ENCODE measurements at regions of chr17 and their contacts with region 1.

Region 1: DNA sequence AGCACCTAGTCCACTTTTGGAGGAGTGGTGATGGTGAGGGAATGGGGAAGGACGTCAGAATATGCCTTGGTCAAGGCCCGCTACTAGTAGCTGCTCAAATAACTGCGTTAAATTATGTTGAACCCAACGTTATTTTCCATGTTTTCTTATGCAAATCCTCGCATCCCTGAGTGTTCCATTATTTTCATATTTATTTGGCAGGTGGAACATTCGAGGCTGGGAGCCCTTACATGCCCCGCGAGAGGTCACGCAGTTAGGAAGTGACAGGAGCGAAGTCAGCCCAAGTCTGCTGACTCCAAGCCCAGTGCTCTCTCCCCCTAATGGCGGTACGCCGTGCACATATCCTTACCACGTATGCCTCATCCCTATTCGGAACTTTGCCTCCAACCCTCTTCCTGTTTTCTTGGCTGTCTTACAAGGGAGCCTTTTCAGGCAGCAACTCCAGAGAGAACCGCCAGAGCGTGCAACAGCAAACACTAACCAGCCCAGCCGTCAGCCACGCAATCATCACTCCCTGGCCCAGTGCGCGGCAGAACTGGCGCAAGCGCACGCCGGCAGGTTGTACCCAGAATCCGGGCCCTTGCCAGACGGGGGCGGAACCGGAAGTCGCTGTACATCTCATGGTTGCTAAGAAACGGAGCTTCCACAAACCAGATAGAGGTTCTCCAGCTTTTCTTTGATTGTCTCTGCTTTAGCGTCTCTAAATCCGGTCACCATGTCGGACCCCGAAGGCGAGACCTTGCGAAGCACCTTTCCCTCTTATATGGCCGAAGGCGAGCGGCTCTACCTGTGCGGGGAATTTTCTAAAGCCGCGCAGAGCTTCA is at the start of gene ODAD4:
- DNase-seq: peak; percentile 98
- H3K4me3 Mint-ChIP-seq: peak within 1 kb of the TSS; percentile 97
- H3K27ac Mint-ChIP-seq: peak within 1 kb of the TSS; percentile 97
- H3K4me1 Mint-ChIP-seq: peaks cover 55% of the 10 kb centered on the region
- H3K27me3 Mint-ChIP-seq: no peaks in the 10 kb centered on the region
- total RNA-seq, gene ODAD4: 0.40 to 0.42 TPM

Region 2: GRCh38 chr17:41904242-41904841 is 25.9 kb before region 1 on chr17:
- CTCF ChIA-PET with region 1: no interaction called
- POLR2A ChIA-PET with region 1: no interaction called
- DNase-seq: no peak
- H3K4me3 Mint-ChIP-seq: no peak overlapping the region
- H3K27ac Mint-ChIP-seq: no peak overlapping the region
- H3K4me1 Mint-ChIP-seq: no peaks in the 10 kb centered on the region
- H3K27me3 Mint-ChIP-seq: no peaks in the 10 kb centered on the region

Region 3: DNA sequence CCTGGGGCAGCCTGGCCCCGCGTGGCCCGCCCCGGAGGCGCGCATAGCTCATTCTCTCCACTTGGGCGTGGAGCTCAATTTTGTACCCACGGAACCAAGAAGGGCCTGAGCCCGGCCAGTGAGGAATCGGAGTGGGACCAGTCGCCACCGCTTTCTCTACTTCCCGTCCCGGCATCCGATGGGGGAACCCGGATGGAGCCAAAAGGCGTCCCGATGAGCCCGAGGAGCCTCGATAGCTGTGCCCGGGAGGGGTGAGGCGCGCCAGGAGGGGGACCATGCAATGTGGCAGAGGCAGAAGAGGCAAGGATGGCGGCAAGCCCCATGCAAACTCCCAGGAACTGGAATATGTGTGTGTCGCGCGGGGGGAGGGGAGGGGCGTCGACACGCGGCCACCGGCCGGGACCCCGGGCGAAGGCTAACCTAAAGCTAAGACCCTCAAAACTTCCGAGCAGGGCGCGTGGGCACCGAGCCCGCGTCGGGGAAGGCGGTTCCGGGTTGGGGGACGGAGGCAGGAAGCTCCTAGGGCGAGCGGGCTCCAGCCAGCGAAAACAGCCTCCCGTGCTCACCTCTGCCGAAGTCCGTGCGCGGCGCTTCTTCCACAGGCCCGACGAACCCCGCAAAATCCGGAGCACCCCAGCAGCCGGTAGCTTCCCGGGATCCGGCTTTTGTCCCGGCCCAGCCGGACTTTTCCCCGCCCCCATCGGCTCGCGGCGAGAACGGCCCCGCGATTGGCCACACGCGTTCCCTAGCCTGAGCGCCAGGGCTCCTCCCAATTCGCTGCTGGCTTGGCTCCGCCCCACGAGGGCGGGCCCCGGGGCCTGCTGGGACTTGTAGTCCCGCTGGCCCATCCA is 11.7 kb before region 1 on chr17 and contains the start of gene ACLY:
- CTCF ChIA-PET with region 1: interaction called, 15 read pairs
- POLR2A ChIA-PET with region 1: interaction called, 5 read pairs
- DNase-seq: peak; percentile 98
- H3K4me3 Mint-ChIP-seq: peak within 1 kb of the TSS; percentile 95
- H3K27ac Mint-ChIP-seq: peak within 1 kb of the TSS; percentile 96
- H3K4me1 Mint-ChIP-seq: peaks cover 38% of the 10 kb centered on the region
- H3K27me3 Mint-ChIP-seq: no peaks in the 10 kb centered on the region
- total RNA-seq, gene ACLY: 143 to 150 TPM

Measured in activated CD4-positive, alpha-beta T cell treated with anti-CD3 and anti-CD28 coated beads, Interleukin-2, amount 10 ng/mL, durations not matched to agents 7 days and 5 days (primary cell).